HEK293T (cell line): ENCODE measurements at regions of chr5 and their contacts with region 1.

Region 1: DNA sequence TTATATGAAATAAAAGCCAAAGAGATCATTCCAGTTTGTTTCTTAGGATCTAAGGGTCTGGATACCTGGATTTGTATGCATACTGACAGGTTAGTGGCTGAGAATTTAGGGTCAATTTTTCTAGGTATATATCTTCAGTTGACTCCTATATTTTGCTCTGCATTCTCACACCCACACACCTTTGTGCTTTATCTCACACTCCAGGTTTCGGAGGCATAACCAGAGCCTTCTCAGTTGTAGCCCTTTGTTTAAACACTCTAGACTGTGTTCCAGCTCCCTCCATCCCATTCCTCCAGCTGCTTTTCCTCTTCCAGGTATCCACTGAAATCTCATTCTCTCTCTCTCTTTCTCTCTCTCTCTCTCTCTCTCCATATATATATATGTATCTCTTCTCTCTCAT is 10.6 kb upstream of the MOCS2 start:
- DNase-seq: no peak

Region 2: GRCh38 chr5:53109443-53110127 is 10.6 kb before region 1 on chr5 and contains the start of gene MOCS2:
- CTCF ChIA-PET with region 1: no interaction called
- POLR2A ChIA-PET with region 1: interaction called, 14 read pairs
- DNase-seq: peak; percentile 97